ENCODE measurements at regions of chr9 and their contacts with region 1.

Region 1: GRCh38 chr9:115373000-115373709 is 255.2 kb upstream of the TNC start:
- DNase-seq: peak; percentile 77 to 95
- H3K4me3 ChIP-seq: peak overlapping the region; percentile 31; the same call in 1 of the 2 replicates
- H3K27ac ChIP-seq: peak overlapping the region; percentile 90
- H3K4me1 ChIP-seq: peaks cover 33% of the 10 kb centered on the region
- H3K27me3 ChIP-seq: no peaks in the 10 kb centered on the region
- CTCF ChIP-seq: no peak

Region 2: DNA sequence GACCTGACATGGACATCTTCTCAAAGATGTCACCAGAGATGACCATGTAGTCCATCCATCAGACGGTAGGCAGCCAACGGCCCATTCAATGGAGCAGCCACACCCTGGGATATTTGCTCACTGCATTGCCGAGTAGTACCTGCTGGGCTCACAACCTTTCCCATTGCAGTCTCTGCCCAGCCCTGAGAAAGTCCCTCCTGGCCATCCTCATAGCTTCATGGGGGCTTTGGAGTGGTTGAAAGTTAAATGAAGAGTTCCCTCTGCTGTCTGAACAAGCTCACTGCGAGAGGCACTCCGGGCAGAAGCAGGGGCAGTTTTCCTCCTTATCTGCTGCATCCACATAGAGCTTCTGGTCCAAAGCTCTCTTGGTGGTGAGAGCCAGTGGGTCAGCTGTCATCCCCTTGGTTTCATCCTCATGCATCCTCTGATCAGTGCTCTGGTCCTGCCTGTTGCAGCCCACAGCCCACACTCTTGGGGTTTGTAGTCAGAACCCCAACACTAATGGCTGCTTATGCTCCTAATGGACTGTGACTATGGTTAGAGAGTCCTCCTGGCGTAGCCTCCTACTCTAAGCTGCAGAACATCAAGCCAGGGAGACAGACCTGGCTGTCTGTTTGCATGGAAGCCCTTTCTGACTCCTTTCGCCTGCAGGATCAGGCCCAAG is 466.1 kb before region 1 on chr9:
- CTCF ChIA-PET with region 1: no interaction called
- POLR2A ChIA-PET with region 1: no interaction called
- intact Hi-C with region 1: loop called (anchors 1 kb)
- DNase-seq: no peak
- H3K4me3 ChIP-seq: no peak overlapping the region
- H3K27ac ChIP-seq: no peak overlapping the region; the same call in 1 of the 2 replicates
- H3K4me1 ChIP-seq: peaks cover 26% of the 10 kb centered on the region
- H3K27me3 ChIP-seq: peaks cover 11% of the 10 kb centered on the region
- CTCF ChIP-seq: peak; percentile 68

Region 3: GRCh38 chr9:115117999-115118878 is 254.9 kb before region 1 on chr9 and contains the start of gene TNC:
- CTCF ChIA-PET with region 1: no interaction called
- POLR2A ChIA-PET with region 1: no interaction called
- intact Hi-C with region 1: loop called (anchors 1 kb)
- DNase-seq: peak in 1 of 2 experiments; percentile 55
- H3K4me3 ChIP-seq: peak within 1 kb of the TSS; percentile 48; the same call in 1 of the 2 replicates
- H3K27ac ChIP-seq: peak within 1 kb of the TSS; percentile 17; the same call in 1 of the 2 replicates
- H3K4me1 ChIP-seq: peaks cover 64% of the 10 kb centered on the region
- H3K27me3 ChIP-seq: peaks cover 1% of the 10 kb centered on the region; the same call in 1 of the 2 replicates
- CTCF ChIP-seq: no peak
- total RNA-seq, gene TNC: 1.1 and 1.9 TPM in 2 replicates

Region 4: DNA sequence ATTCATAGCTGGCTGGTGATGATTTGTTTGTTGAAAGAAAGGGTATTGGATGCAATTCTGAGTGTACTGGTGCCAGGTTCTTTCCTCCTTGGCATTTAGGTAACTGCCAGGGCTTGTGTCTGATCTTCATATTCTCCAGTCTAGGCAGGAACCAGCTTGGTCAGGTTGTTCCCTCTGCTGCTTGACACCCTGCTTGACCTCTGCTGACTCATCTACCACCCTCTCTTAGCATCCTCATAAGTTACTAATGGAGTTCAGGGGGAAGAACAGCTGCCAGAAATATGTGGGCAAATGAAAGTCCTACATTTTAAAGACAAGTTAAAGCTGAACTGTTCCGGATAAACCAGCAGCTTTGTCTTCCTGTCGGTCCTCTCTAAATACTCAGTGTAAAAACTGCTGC is 139.1 kb before region 1 on chr9:
- CTCF ChIA-PET with region 1: no interaction called
- POLR2A ChIA-PET with region 1: no interaction called
- intact Hi-C with region 1: loop called (anchors 2 kb)
- DNase-seq: peak; percentile 69 to 85
- H3K4me3 ChIP-seq: no peak overlapping the region
- H3K27ac ChIP-seq: 0 out of 2 replicates have a peak overlapping the region, but pooled peaks have one; percentile 24
- H3K4me1 ChIP-seq: peaks cover 18% of the 10 kb centered on the region
- H3K27me3 ChIP-seq: no peaks in the 10 kb centered on the region
- CTCF ChIP-seq: no peak

Region 5: DNA sequence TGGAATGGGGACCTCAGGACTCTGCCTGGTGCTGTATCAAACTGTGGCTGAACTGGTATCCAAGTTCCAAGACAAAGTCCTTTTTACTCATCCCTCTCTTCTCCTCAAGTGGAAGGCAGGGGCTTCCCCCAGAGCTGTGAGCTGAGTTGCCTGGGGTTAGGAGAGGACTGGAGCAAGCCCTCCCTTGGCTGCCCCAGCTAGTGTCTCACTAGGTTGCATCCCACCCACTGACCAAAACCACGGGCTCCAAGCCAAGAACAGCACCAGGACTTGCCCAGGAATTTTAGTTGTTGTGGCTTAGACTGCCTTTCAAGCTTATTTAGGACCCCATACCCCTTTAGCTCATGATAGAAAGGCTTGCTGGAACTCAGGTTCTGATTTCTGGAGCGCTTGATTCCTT is 96.5 kb before region 1 on chr9:
- CTCF ChIA-PET with region 1: no interaction called
- POLR2A ChIA-PET with region 1: no interaction called
- intact Hi-C with region 1: loop called (anchors 5 kb)
- DNase-seq: no peak
- H3K4me3 ChIP-seq: no peak overlapping the region
- H3K27ac ChIP-seq: no peak overlapping the region
- H3K4me1 ChIP-seq: no peaks in the 10 kb centered on the region
- H3K27me3 ChIP-seq: no peaks in the 10 kb centered on the region
- CTCF ChIP-seq: no peak

Region 6: DNA sequence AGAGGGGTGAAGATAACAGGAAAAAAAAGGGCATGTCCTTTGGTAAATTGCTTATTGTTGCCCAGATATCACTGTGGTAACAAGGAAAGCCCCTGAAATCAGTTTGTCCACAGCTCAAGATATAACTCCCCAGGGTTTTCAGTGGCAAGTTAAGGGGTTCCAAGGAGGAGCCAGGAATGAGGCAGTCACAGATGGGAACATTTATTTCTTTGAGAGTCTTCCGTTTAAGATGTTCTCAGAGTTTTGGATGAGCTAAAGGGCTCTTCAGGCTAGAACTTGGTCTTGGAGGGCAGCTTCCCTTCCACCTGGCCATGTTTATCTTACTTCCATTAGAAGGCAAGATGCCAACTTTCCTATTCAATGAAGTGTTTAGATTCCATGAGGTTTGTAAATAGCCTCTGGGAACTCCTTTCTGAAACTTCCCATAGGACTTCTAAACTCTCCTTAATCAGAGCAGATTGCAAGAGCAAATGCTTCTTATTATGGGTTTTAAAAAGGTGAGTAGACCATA is 22.4 kb after region 1 on chr9:
- CTCF ChIA-PET with region 1: no interaction called
- POLR2A ChIA-PET with region 1: no interaction called
- intact Hi-C with region 1: loop called (anchors 1 kb)
- DNase-seq: peak in 1 of 2 experiments; percentile 55
- H3K4me3 ChIP-seq: no peak overlapping the region
- H3K27ac ChIP-seq: no peak overlapping the region
- H3K4me1 ChIP-seq: peaks cover 34% of the 10 kb centered on the region
- H3K27me3 ChIP-seq: no peaks in the 10 kb centered on the region
- CTCF ChIP-seq: no peak

Region 7: GRCh38 chr9:116189683-116190082 is 816.5 kb after region 1 on chr9:
- CTCF ChIA-PET with region 1: no interaction called
- POLR2A ChIA-PET with region 1: no interaction called
- intact Hi-C with region 1: loop called (anchors 5 kb)
- DNase-seq: peak in 1 of 2 experiments; percentile 17
- H3K4me3 ChIP-seq: no peak overlapping the region
- H3K27ac ChIP-seq: 0 out of 2 replicates have a peak overlapping the region, but pooled peaks have one; percentile 61
- H3K4me1 ChIP-seq: peaks cover 47% of the 10 kb centered on the region
- H3K27me3 ChIP-seq: no peaks in the 10 kb centered on the region
- CTCF ChIP-seq: no peak